Caco-2 (cell line): ENCODE measurements at regions of chr15 and their contacts with region 1.

Region 1: GRCh38 chr15:59917504-59918157 is 86.5 kb upstream of the FOXB1 start:
- DNase-seq: peak; percentile 76 to 84
- H3K4me3 ChIP-seq: no peak overlapping the region
- H3K4me3 Mint-ChIP-seq: no peak overlapping the region
- H3K27ac Mint-ChIP-seq: no peak overlapping the region
- H3K4me1 ChIP-seq: no peaks in the 10 kb centered on the region
- H3K4me1 Mint-ChIP-seq: no peaks in the 10 kb centered on the region
- H3K27me3 ChIP-seq: no peaks in the 10 kb centered on the region
- H3K27me3 Mint-ChIP-seq: peaks cover 17% of the 10 kb centered on the region
- CTCF ChIP-seq: peak; percentile 39 to 60

Region 2: GRCh38 chr15:59958288-59958687 is 40.7 kb after region 1 on chr15:
- CTCF ChIA-PET with region 1: no interaction called
- POLR2A ChIA-PET with region 1: no interaction called
- intact Hi-C with region 1: no loop called
- DNase-seq: no peak
- H3K4me3 ChIP-seq: no peak overlapping the region
- H3K4me3 Mint-ChIP-seq: no peak overlapping the region
- H3K27ac Mint-ChIP-seq: no peak overlapping the region
- H3K4me1 ChIP-seq: no peaks in the 10 kb centered on the region
- H3K4me1 Mint-ChIP-seq: no peaks in the 10 kb centered on the region
- H3K27me3 ChIP-seq: no peaks in the 10 kb centered on the region
- H3K27me3 Mint-ChIP-seq: peaks cover 6% of the 10 kb centered on the region
- CTCF ChIP-seq: no peak

Region 3: DNA sequence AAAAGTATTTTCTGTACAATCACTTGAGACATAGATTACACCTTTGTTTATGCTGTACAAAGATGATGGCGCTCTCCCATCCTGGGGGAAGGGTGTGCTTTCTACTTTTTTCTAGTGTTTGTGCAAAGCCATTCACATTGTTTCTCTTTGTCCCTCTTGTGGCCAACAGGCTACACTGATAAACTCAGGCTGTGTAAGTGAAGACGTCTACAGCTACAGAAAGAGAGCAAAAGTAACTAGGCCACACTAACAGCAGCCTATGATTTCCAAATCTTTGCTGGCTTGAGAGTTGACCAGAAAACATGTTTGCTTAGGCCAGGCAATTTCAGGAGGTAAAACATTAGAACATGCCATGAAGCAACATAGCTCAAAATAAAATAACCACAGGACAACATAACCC is 161.6 kb after region 1 on chr15:
- CTCF ChIA-PET with region 1: no interaction called
- POLR2A ChIA-PET with region 1: no interaction called
- intact Hi-C with region 1: loop called (anchors 2 kb)
- DNase-seq: no peak
- H3K4me3 ChIP-seq: no peak overlapping the region
- H3K4me3 Mint-ChIP-seq: no peak overlapping the region
- H3K27ac Mint-ChIP-seq: no peak overlapping the region
- H3K4me1 ChIP-seq: no peaks in the 10 kb centered on the region
- H3K4me1 Mint-ChIP-seq: peaks cover 5% of the 10 kb centered on the region
- H3K27me3 ChIP-seq: no peaks in the 10 kb centered on the region
- H3K27me3 Mint-ChIP-seq: peaks cover 9% of the 10 kb centered on the region
- CTCF ChIP-seq: peak in 1 of 2 experiments; percentile 52

Region 4: GRCh38 chr15:60155666-60156065 is 238.0 kb after region 1 on chr15:
- CTCF ChIA-PET with region 1: no interaction called
- POLR2A ChIA-PET with region 1: no interaction called
- intact Hi-C with region 1: no loop called
- DNase-seq: no peak
- H3K4me3 ChIP-seq: no peak overlapping the region
- H3K4me3 Mint-ChIP-seq: no peak overlapping the region
- H3K27ac Mint-ChIP-seq: no peak overlapping the region
- H3K4me1 ChIP-seq: no peaks in the 10 kb centered on the region
- H3K4me1 Mint-ChIP-seq: no peaks in the 10 kb centered on the region
- H3K27me3 ChIP-seq: no peaks in the 10 kb centered on the region
- H3K27me3 Mint-ChIP-seq: peaks cover 14% of the 10 kb centered on the region
- CTCF ChIP-seq: no peak